HEK293T (cell line): ENCODE measurements at regions of chr3 and their contacts with region 1.

Region 1: GRCh38 chr3:124730129-124730940 is at the start of gene UMPS:
- DNase-seq: peak; percentile 92

Region 2: GRCh38 chr3:124741027-124741426 is 10.7 kb after region 1 on chr3:
- CTCF ChIA-PET with region 1: no interaction called
- POLR2A ChIA-PET with region 1: interaction called, 10 read pairs
- DNase-seq: no peak

Region 3: GRCh38 chr3:124791639-124792151 is 61.4 kb after region 1 on chr3:
- CTCF ChIA-PET with region 1: no interaction called
- POLR2A ChIA-PET with region 1: no interaction called
- DNase-seq: no peak